ENCODE measurements at regions of chr4 and their contacts with region 1.

Region 1: GRCh38 chr4:7101692-7102515 is 34.0 kb upstream of the GRPEL1 start:
- DNase-seq: peak; percentile 75 to 77
- H3K4me3 ChIP-seq: peak overlapping the region; percentile 57
- H3K4me3 Mint-ChIP-seq: peak overlapping the region; percentile 83
- H3K27ac Mint-ChIP-seq: no peak overlapping the region
- H3K4me1 ChIP-seq: peaks cover 11% of the 10 kb centered on the region
- H3K4me1 Mint-ChIP-seq: peaks cover 5% of the 10 kb centered on the region
- H3K27me3 ChIP-seq: no peaks in the 10 kb centered on the region
- H3K27me3 Mint-ChIP-seq: peaks cover 1% of the 10 kb centered on the region
- CTCF ChIP-seq: peak; percentile 58 to 71

Region 2: GRCh38 chr4:5956285-5957021 is 1145.5 kb before region 1 on chr4:
- CTCF ChIA-PET with region 1: no interaction called
- POLR2A ChIA-PET with region 1: no interaction called
- intact Hi-C with region 1: no loop called
- DNase-seq: no peak
- H3K4me3 ChIP-seq: no peak overlapping the region
- H3K4me3 Mint-ChIP-seq: no peak overlapping the region
- H3K27ac Mint-ChIP-seq: no peak overlapping the region
- H3K4me1 ChIP-seq: no peaks in the 10 kb centered on the region
- H3K4me1 Mint-ChIP-seq: no peaks in the 10 kb centered on the region
- H3K27me3 ChIP-seq: no peaks in the 10 kb centered on the region; the same call in 1 of the 2 replicates
- H3K27me3 Mint-ChIP-seq: peaks cover 15% of the 10 kb centered on the region
- CTCF ChIP-seq: no peak

Region 3: DNA sequence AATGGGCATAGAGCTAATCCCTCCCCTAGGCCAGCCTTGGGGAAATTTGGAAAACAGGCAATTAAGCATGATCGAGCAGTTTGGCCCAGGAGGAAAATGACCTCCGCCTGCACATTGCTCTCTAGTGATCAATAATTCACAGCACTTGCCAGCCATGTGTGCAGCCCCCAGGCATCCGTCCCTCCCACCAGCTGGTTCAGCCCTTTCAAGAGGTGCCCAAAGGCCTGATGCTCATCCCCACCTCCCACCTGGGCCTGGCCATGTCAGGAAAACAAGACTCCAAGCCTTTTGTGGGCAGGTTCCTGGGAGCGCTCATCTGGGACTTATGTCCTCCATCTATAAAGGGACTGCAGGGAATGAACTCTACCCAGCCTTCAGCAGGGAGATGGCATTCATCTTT is 612.0 kb before region 1 on chr4:
- CTCF ChIA-PET with region 1: no interaction called
- POLR2A ChIA-PET with region 1: no interaction called
- intact Hi-C with region 1: loop called (anchors 5 kb)
- DNase-seq: no peak
- H3K4me3 ChIP-seq: no peak overlapping the region
- H3K4me3 Mint-ChIP-seq: no peak overlapping the region
- H3K27ac Mint-ChIP-seq: no peak overlapping the region
- H3K4me1 ChIP-seq: no peaks in the 10 kb centered on the region
- H3K4me1 Mint-ChIP-seq: no peaks in the 10 kb centered on the region
- H3K27me3 ChIP-seq: no peaks in the 10 kb centered on the region; the same call in 1 of the 2 replicates
- H3K27me3 Mint-ChIP-seq: peaks cover 32% of the 10 kb centered on the region
- CTCF ChIP-seq: no peak

Region 4: DNA sequence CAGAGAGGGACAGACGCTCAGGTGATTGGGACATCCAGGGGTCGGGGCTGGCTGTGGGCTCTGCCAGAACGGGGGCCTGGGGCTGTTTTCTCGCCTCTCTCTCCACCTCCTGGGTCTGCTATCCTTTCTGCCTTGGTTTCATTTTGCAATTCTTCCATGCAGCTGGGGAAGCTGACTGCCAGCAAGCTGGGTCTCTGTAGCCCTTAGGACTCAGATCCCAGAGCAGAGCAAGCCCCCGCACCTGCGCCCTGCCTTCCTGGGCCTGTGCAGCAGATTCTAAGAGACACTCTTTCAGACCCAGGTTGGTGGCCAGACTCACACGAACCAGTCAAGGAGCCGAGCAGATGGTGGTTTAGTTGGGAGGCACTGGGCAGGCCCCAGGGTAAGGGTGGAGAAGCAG is 25.1 kb after region 1 on chr4:
- CTCF ChIA-PET with region 1: no interaction called
- POLR2A ChIA-PET with region 1: no interaction called
- intact Hi-C with region 1: loop called (anchors 2 kb)
- DNase-seq: no peak
- H3K4me3 ChIP-seq: no peak overlapping the region
- H3K4me3 Mint-ChIP-seq: no peak overlapping the region
- H3K27ac Mint-ChIP-seq: no peak overlapping the region
- H3K4me1 ChIP-seq: no peaks in the 10 kb centered on the region
- H3K4me1 Mint-ChIP-seq: no peaks in the 10 kb centered on the region
- H3K27me3 ChIP-seq: no peaks in the 10 kb centered on the region
- H3K27me3 Mint-ChIP-seq: no peaks in the 10 kb centered on the region
- CTCF ChIP-seq: no peak

Region 5: DNA sequence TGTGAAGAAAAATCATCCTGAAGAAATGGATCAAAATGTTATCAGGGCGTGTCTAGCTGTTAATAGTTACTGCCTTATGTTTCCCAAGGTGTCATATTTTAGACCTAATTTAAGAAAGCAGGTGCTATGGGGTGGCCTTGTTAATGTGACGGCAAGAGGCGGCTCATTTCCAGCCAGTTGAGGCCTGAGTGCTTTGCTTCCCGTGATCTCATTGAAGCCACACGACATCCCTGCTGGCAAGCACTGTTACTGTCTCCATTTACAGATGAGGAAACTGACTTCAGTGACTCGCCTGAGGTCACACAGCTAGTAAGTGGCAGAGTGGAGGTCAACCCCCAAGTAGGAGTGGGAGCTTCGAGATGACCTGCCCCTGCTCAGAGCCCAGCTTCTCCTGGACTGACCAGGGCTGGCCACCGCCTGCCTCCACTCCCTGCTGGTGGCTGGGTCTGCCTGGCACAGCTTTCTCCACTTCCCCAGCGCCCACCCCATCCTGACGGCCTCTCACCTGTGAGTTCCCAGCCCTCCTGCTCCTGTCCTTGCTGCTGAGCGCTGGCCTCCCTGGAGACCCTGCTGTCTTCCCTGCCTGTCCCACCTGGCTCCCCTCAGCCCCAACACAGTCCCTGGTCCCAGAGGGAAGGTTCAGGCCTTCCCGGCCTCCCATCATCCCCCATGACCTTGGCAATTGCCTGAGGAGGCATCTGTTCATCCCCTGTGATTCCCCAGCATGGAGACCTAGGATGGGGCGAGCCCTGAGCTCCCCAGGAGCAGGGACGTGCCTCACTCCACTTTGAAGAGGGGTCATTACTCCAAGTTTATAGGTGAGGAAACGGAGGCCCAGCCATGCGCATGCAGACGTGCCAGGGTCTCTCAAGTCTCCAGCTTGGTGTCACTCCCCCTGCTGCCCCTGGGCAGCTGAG is 42.7 kb after region 1 on chr4:
- CTCF ChIA-PET with region 1: no interaction called
- POLR2A ChIA-PET with region 1: no interaction called
- intact Hi-C with region 1: loop called (anchors 5 kb)
- DNase-seq: no peak
- H3K4me3 ChIP-seq: no peak overlapping the region
- H3K4me3 Mint-ChIP-seq: no peak overlapping the region
- H3K27ac Mint-ChIP-seq: no peak overlapping the region
- H3K4me1 ChIP-seq: no peaks in the 10 kb centered on the region
- H3K4me1 Mint-ChIP-seq: no peaks in the 10 kb centered on the region
- H3K27me3 ChIP-seq: no peaks in the 10 kb centered on the region
- H3K27me3 Mint-ChIP-seq: no peaks in the 10 kb centered on the region
- CTCF ChIP-seq: no peak

Region 6: DNA sequence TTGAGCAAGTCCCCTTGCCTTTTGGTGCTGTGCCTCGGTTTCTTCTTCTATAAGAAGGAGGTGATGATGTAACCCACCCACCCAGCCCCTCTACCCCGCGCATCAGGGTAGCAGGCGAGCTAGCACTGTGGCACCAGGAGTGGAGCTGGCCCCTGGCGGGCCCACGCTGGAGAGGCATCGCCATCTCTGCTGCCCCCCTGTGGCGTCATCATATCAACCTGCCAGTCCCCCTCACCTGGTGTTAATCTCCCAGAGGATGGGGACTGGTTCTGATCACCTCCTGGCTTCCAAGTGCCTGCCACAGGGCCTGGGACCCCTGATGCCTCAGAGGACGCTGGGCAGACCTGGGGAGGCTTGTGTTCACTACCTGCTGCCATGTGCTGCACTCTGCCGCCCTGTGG is 84.2 kb after region 1 on chr4:
- CTCF ChIA-PET with region 1: interaction called, 4 read pairs
- POLR2A ChIA-PET with region 1: no interaction called
- intact Hi-C with region 1: loop called (anchors 1 kb)
- DNase-seq: peak in 1 of 2 experiments; percentile 62
- H3K4me3 ChIP-seq: no peak overlapping the region
- H3K4me3 Mint-ChIP-seq: no peak overlapping the region
- H3K27ac Mint-ChIP-seq: no peak overlapping the region
- H3K4me1 ChIP-seq: no peaks in the 10 kb centered on the region
- H3K4me1 Mint-ChIP-seq: no peaks in the 10 kb centered on the region
- H3K27me3 ChIP-seq: no peaks in the 10 kb centered on the region
- H3K27me3 Mint-ChIP-seq: peaks cover 8% of the 10 kb centered on the region
- CTCF ChIP-seq: peak; percentile 38 to 58

Measured in Caco-2 (cell line).